HEK293 (cell line): ENCODE measurements at regions of chr6 and their contacts with region 1.

Region 1: DNA sequence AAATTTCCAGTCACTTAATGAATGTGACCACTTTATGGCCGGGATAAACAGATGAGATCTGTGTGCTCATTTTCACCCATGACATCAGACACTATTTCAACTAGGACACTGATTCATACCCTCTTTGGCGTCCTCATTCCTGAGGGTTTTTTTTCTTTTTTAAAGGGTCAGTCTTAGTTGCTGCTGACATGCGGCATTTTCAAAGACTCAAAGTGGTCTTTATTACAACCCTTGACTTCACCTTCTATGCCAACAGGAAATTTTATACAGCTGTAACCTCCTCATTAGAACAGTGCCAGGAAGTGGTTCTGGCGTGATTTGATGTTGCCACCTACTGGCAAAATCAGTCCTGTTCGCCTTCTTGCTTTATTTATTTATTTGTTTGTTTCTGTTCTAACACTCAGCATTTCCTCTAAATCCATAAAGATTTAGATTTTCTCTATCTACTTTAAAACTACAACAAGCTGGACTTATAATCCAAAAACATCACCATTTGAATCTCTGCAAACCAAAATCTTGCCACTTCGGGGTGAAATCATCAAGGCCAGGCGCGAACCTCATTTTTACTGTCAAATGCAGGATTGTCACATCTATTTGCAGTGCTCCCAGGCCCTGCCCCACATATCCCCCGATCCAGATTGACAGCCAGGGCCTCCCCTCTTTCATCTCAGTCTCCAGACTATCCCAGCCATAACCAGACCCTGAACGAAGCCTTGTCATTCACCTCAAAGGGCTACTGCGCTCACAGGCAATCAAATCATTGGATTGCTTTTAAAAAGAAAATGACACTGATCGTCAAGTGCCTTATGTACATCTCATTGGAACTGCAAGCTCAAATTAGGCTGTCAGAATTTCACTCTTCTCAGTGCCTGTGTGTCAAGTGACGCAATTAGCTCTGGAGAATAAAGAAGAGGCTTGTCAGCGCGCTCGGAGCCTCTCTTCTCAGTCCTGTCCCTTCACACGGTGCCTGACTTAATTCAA is 77.5 kb downstream of the C6orf118 start:
- H3K4me3 ChIP-seq: no peak overlapping the region
- H3K27ac ChIP-seq: no peak overlapping the region
- H3K4me1 ChIP-seq: no peaks in the 10 kb centered on the region
- CTCF ChIP-seq: peak; percentile 32; the same call in 1 of the 2 replicates

Region 2: DNA sequence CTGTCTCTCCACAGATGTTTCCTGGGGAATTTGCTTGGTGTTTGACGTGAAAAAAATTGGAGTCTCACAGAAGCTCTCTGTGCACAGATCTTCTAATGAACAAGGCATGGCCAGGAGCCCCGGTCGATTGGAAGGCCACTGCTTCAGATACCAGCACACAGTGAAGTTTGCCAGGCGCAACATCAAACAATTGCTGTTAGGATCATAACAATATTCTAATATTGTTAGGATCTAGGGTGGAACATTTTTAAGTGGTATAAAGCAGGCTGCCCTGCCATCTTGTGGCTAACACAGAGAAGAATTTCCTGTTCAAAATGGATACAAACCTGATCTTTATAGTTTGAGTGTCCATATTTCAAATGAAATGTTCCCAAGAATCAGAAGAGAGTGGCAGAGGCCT is 13.4 kb after region 1 on chr6:
- CTCF ChIA-PET with region 1: interaction called, 33 read pairs
- POLR2A ChIA-PET with region 1: no interaction called
- H3K4me3 ChIP-seq: no peak overlapping the region
- H3K27ac ChIP-seq: no peak overlapping the region
- H3K4me1 ChIP-seq: no peaks in the 10 kb centered on the region
- CTCF ChIP-seq: no peak

Region 3: GRCh38 chr6:165321555-165322145 is 89.8 kb after region 1 on chr6:
- CTCF ChIA-PET with region 1: no interaction called
- POLR2A ChIA-PET with region 1: no interaction called
- H3K4me3 ChIP-seq: no peak overlapping the region
- H3K27ac ChIP-seq: no peak overlapping the region
- H3K4me1 ChIP-seq: no peaks in the 10 kb centered on the region
- CTCF ChIP-seq: no peak

Region 4: DNA sequence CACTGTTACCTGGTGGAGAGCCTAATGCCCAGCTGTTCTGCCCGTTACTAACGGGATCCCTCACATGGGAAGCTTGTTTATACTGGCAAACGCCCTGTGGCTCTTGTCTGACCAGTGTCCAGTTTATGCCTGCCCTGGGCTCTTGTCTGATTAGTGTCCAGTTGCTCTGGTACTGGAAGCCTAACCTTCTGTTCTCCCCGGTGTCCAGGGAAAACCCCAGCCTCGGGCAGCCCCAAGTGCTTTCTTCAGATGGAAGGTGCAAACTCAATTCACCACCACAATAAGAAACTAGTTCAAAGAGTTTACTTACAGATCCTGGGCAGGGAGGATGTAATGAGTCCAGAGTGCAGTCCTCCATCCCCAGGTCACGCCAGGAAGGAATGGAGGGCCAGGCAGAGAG is 787.3 kb after region 1 on chr6:
- CTCF ChIA-PET with region 1: no interaction called
- POLR2A ChIA-PET with region 1: no interaction called
- H3K4me3 ChIP-seq: no peak overlapping the region
- H3K27ac ChIP-seq: no peak overlapping the region
- H3K4me1 ChIP-seq: no peaks in the 10 kb centered on the region
- CTCF ChIP-seq: no peak